ENCODE measurements at regions of chr3 and their contacts with region 1.

Region 1: DNA sequence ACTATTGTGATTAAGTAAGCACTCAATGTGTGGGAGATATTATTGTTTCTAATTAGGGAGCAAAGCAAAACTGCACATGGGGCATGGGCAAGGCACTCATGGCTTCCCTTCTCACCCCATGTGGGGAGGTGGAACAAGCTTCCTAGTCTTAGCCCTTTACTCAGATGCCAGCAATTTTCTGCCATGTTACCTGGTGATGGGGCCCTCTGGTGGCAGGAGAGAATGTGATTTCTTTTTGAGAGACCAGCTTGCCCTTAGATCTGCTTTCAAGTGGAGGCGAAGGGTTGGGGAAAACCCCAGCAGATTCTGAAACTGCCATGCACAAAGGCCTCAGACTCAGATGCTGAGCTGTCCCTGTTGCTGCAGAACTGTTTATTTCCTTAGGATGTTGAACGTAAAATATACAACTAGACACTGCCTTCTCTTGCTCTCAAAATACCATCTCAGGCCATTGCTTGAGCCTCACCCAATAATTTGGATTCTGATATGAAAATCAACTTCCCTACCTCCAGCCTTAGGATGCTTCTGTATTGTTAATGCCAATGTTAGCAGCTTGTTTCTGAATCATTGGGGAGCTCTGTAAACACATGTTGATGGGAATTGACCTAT is 130.2 kb upstream of the TPRG1 start:
- DNase-seq: peak; percentile 78
- H3K4me3 Mint-ChIP-seq: no peak overlapping the region
- H3K27ac Mint-ChIP-seq: peak overlapping the region; percentile 49
- H3K4me1 Mint-ChIP-seq: peaks cover 46% of the 10 kb centered on the region
- H3K27me3 Mint-ChIP-seq: no peaks in the 10 kb centered on the region

Region 2: DNA sequence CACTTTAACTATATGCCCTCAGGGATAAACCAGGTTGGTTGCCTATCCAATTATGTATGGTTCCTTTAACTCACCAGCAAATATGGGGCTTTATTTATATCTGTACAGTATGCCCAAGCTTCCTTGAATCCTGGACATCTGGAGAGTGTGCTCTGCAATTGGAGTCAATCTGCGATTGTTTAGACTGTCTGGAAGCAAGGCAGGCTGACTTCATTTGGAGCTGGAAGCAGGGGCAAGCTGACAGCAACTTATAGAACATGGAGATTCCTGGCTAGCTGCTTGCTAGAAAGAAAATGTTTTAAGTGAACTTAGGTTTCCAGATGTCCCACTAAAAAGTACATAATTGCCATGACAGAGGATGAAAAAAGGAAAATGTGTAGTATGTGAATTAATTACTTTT is 66.5 kb after region 1 on chr3:
- CTCF ChIA-PET with region 1: no interaction called
- POLR2A ChIA-PET with region 1: no interaction called
- DNase-seq: no peak
- H3K4me3 Mint-ChIP-seq: no peak overlapping the region
- H3K27ac Mint-ChIP-seq: no peak overlapping the region
- H3K4me1 Mint-ChIP-seq: no peaks in the 10 kb centered on the region
- H3K27me3 Mint-ChIP-seq: peaks cover 25% of the 10 kb centered on the region

Region 3: DNA sequence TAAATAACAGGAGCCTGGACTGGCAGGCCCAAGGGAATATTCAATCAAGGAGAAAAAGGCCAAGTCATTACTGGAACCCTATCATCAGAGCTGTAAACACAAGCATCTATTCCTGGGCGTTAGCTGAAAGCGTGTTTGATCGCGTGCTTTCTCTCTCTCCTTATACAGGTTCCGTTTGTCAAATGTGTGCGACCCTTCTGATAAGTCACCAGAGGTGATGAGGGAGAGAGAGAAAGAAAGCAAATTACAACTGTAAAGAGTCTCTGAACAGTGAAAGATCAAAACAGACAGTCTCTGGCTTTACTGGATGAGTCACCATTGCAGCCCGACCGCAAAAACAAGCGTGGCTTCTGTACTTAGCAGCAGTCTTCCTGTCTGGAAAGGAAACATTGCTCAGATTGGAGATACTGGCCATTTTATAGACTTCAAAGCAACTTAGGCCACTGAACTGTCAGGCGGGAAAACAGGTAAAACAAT is 90.7 kb after region 1 on chr3:
- CTCF ChIA-PET with region 1: interaction called, 13 read pairs
- POLR2A ChIA-PET with region 1: interaction called, 14 read pairs
- DNase-seq: peak; percentile 88
- H3K4me3 Mint-ChIP-seq: peak overlapping the region; percentile 46
- H3K27ac Mint-ChIP-seq: peak overlapping the region; percentile 94
- H3K4me1 Mint-ChIP-seq: peaks cover 39% of the 10 kb centered on the region
- H3K27me3 Mint-ChIP-seq: no peaks in the 10 kb centered on the region

Region 4: DNA sequence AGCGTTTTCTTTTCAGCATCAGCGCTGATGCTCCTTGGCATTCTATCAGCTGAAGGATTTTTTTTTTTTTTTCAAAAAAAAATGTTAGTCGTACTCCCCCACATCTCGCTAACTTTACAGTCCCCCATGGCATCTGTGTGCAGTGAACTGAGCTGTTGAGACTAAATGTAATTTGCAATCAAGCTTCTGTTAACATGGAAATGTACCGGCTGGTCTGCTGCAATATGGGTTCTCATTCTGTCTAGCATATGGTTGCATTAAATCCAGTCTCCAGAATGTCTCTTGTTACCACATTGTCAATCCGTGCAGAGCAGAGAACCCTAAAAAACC is 98.0 kb after region 1 on chr3:
- CTCF ChIA-PET with region 1: interaction called, 11 read pairs
- POLR2A ChIA-PET with region 1: interaction called, 3 read pairs
- DNase-seq: no peak
- H3K4me3 Mint-ChIP-seq: no peak overlapping the region
- H3K27ac Mint-ChIP-seq: no peak overlapping the region
- H3K4me1 Mint-ChIP-seq: peaks cover 40% of the 10 kb centered on the region
- H3K27me3 Mint-ChIP-seq: no peaks in the 10 kb centered on the region

Region 5: GRCh38 chr3:189148081-189148507 is 106.5 kb after region 1 on chr3:
- CTCF ChIA-PET with region 1: interaction called, 10 read pairs
- POLR2A ChIA-PET with region 1: interaction called, 3 read pairs
- DNase-seq: peak; percentile 75
- H3K4me3 Mint-ChIP-seq: no peak overlapping the region
- H3K27ac Mint-ChIP-seq: no peak overlapping the region
- H3K4me1 Mint-ChIP-seq: peaks cover 42% of the 10 kb centered on the region
- H3K27me3 Mint-ChIP-seq: no peaks in the 10 kb centered on the region